Vagina (tissue), 2 donors: ENCODE measurements at regions of chr12 and their contacts with region 1.

Region 1: DNA sequence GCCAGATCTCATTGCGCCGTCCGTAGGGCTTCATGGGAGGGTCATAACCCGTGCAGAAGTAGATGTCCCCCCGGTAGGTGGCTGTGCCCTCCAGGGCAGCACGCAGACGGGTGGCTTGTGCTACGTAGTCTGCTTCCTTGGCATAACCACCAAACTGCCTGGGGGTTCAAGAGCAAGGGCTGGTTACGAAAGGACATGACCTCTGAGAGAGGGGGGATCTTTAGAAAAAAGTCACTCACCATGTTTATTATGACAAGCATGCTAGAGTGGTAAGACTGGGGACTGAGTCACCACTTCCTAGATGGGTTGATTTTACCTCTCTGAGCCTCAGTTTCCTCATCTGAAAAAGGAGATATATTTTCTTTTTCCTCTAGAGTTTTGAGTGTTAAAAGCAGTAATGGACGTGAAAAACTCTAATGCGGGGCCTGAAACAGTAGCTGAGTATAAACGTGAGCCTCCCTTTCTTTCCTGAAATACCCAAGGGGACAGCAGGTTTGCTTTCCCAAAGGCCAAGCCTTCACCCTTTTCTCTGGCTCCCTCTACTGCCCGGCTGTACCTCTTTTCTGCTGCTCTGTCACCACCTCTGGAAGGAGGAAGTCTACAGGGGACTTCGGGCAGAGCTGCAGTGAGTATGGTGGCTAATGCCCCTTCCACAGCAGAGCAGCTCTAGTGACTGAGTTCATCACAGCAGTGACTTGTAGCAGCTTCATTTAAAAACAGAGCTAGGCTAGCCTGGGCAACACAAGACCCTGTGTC is 23.5 kb upstream of the GPRC5D start:
- DNase-seq: no peak
- H3K4me3 ChIP-seq: no peak overlapping the region
- H3K27ac ChIP-seq: peak overlapping the region; percentile 82
- H3K4me1 ChIP-seq: peaks cover 42% of the 10 kb centered on the region
- H3K27me3 ChIP-seq: no peaks in the 10 kb centered on the region
- CTCF ChIP-seq: peak; percentile 1 to 20 (median 14)
- POLR2A ChIP-seq: no peak

Region 2: GRCh38 chr12:12837025-12837872 is 138.3 kb before region 1 on chr12:
- intact Hi-C with region 1: loop called (anchors 10 kb)
- DNase-seq: no peak
- H3K4me3 ChIP-seq: no peak overlapping the region
- H3K27ac ChIP-seq: no peak overlapping the region
- H3K4me1 ChIP-seq: peaks cover 13% of the 10 kb centered on the region
- H3K27me3 ChIP-seq: no peaks in the 10 kb centered on the region
- CTCF ChIP-seq: peak; percentile 4 to 47 (median 23)
- POLR2A ChIP-seq: no peak

Region 3: DNA sequence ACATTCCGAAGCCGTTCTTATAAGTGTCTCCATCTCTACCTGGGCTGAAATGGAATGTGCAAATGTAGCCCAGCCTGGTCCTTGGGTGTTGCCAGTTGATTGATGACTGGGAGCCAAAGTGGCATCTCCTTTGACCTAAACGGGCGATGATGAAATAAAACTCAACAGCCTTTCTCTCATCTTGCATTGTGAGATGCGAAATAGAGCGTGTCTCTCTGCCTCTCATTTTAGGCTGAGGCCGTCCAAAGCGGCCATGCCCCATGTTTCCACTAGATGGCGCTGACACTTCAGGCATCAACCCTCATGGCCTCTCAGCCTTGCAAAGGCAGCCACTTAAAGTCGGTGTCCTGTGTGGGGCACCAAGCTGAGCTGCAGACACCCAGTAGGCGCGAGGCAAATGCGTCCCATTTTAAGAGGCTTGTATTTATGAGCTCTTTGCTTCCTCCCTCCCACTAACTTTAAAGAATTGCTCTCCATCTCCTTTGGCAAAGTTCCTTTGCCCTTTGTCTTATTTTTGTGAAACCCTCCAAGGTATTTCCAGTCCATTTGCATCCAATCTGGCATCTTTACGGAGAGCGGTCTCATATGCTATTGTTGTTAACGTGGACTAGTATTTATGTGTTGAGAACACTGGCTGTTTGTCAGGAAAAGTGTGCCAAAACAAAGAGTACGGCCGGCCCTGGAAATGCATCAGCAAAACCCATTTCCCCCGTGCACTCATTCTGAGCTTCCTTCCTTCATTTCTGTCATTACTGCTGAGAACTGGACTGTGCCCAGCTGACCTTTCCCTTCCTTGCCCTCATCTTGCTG is 59.2 kb before region 1 on chr12:
- intact Hi-C with region 1: loop called (anchors 5 kb)
- DNase-seq: no peak
- H3K4me3 ChIP-seq: no peak overlapping the region
- H3K27ac ChIP-seq: peak overlapping the region; percentile 49
- H3K4me1 ChIP-seq: peaks cover 20% of the 10 kb centered on the region
- H3K27me3 ChIP-seq: no peaks in the 10 kb centered on the region
- CTCF ChIP-seq: peak; percentile 93 to 99 (median 96)
- POLR2A ChIP-seq: no peak